ENCODE measurements at regions of chr17 and their contacts with region 1.

Region 1: GRCh38 chr17:56960596-56961538 is at the start of gene COIL:
- DNase-seq: peak; percentile 90 to 93 (median 91)
- H3K4me3 ChIP-seq: peak within 1 kb of the TSS; percentile 81 to 82
- H3K4me3 Mint-ChIP-seq: peak within 1 kb of the TSS; percentile 78 to 91 (median 89)
- H3K27ac ChIP-seq: peak within 1 kb of the TSS; percentile 87
- H3K27ac Mint-ChIP-seq: peak within 1 kb of the TSS; percentile 65 to 96 (median 94)
- H3K4me1 ChIP-seq: peaks cover 20% of the 10 kb centered on the region
- H3K4me1 Mint-ChIP-seq: peaks cover 10 to 29% (median 21%) of the 10 kb centered on the region in 4 donors
- H3K27me3 ChIP-seq: no peaks in the 10 kb centered on the region
- H3K27me3 Mint-ChIP-seq: peaks cover 0 to 1% of the 10 kb centered on the region in 2 donors
- total RNA-seq, gene COIL: 19.1 to 19.6 TPM

Region 2: GRCh38 chr17:56592487-56593085 is 368.3 kb before region 1 on chr17:
- CTCF ChIA-PET with region 1: no interaction called
- POLR2A ChIA-PET with region 1: no interaction called
- intact Hi-C with region 1: loop called (anchors 5 kb)
- DNase-seq: peak; percentile 50 to 61 (median 56)
- H3K4me3 ChIP-seq: peak overlapping the region; percentile 26 to 36
- H3K4me3 Mint-ChIP-seq: peak overlapping the region; percentile 73 to 89 (median 79)
- H3K27ac ChIP-seq: no peak overlapping the region
- H3K27ac Mint-ChIP-seq: peak overlapping the region in 1 of 7 donors; percentile 41
- H3K4me1 ChIP-seq: peaks cover 36% of the 10 kb centered on the region
- H3K4me1 Mint-ChIP-seq: peaks cover 11 to 41% (median 18%) of the 10 kb centered on the region in 4 donors
- H3K27me3 ChIP-seq: peaks cover 13% of the 10 kb centered on the region
- H3K27me3 Mint-ChIP-seq: peaks cover 28 to 46% of the 10 kb centered on the region in 2 donors

Region 3: DNA sequence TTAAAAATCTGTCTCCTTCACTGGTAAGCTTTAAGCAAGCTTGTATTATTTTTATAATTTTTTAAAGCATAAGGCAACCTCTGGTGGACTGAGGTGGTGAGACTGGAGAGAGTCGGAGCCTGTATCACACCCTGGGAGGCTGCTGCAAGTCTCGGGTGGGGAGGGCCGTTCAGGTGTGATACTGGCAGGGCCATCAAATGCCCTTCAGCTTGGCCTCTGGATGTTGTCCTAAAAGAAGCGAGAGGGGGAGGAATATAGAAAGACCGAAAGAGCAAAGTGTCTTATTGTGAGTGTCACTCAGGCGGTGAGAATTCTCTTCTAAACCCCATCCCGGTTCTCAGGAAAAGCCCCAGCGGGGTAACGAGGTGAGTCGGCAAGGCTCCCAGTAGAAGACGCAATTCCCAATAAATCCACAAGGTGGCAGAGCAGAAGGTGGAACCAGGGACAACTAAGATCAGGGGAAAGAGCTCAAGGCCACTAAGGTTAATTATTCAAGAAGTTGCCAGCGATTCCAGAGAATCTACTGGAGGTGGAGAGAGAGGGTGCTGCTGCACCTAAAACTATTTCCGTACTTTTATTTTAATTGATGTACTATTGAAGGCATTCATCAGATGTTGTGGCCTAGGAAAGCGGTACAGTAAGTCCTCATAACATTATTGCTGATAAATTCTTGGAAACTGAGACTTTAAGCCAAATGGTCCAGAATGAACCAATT is 141.3 kb before region 1 on chr17:
- CTCF ChIA-PET with region 1: interaction called, 8 read pairs
- POLR2A ChIA-PET with region 1: no interaction called
- intact Hi-C with region 1: loop called (anchors 1 kb)
- DNase-seq: peak; percentile 69 to 78 (median 71)
- H3K4me3 ChIP-seq: no peak overlapping the region
- H3K4me3 Mint-ChIP-seq: no peak overlapping the region
- H3K27ac ChIP-seq: no peak overlapping the region
- H3K27ac Mint-ChIP-seq: peak overlapping the region in 1 of 7 donors; percentile 29
- H3K4me1 ChIP-seq: peaks cover 4% of the 10 kb centered on the region
- H3K4me1 Mint-ChIP-seq: peaks cover 0 to 6% (median 4%) of the 10 kb centered on the region in 4 donors
- H3K27me3 ChIP-seq: no peaks in the 10 kb centered on the region
- H3K27me3 Mint-ChIP-seq: no peaks in the 10 kb centered on the region

Region 4: GRCh38 chr17:56833809-56834379 is 127.0 kb before region 1 on chr17 and contains the starts of genes C17orf67 and DGKE:
- CTCF ChIA-PET with region 1: no interaction called
- POLR2A ChIA-PET with region 1: interaction called, 3 read pairs
- intact Hi-C with region 1: loop called (anchors 5 kb)
- DNase-seq: peak; percentile 98 to 99 (median 98)
- H3K4me3 ChIP-seq: peak within 1 kb of the TSS; percentile 49 to 88
- H3K4me3 Mint-ChIP-seq: peak within 1 kb of the TSS; percentile 95 to 98 (median 96)
- H3K27ac ChIP-seq: peak within 1 kb of the TSS; percentile 79
- H3K27ac Mint-ChIP-seq: peak within 1 kb of the TSS; percentile 92 to 97 (median 95)
- H3K4me1 ChIP-seq: peaks cover 67% of the 10 kb centered on the region
- H3K4me1 Mint-ChIP-seq: peaks cover 43 to 75% (median 57%) of the 10 kb centered on the region in 4 donors
- H3K27me3 ChIP-seq: no peaks in the 10 kb centered on the region
- H3K27me3 Mint-ChIP-seq: no peaks in the 10 kb centered on the region
- total RNA-seq, gene C17orf67: 9.5 to 11.2 TPM
- total RNA-seq, gene DGKE: 36.7 to 37.7 TPM

Region 5: GRCh38 chr17:56913864-56914640 is 46.8 kb before region 1 on chr17 and contains the start of gene TRIM25:
- CTCF ChIA-PET with region 1: interaction called, 3 read pairs
- POLR2A ChIA-PET with region 1: interaction called, 8 read pairs
- intact Hi-C with region 1: loop called (anchors 1 kb)
- DNase-seq: peak; percentile 75 to 93 (median 80)
- H3K4me3 ChIP-seq: peak within 1 kb of the TSS; percentile 79 to 91
- H3K4me3 Mint-ChIP-seq: peak within 1 kb of the TSS; percentile 80 to 97 (median 90)
- H3K27ac ChIP-seq: peak within 1 kb of the TSS; percentile 85
- H3K27ac Mint-ChIP-seq: peak within 1 kb of the TSS; percentile 78 to 98 (median 94)
- H3K4me1 ChIP-seq: peaks cover 43% of the 10 kb centered on the region
- H3K4me1 Mint-ChIP-seq: peaks cover 33 to 44% (median 40%) of the 10 kb centered on the region in 4 donors
- H3K27me3 ChIP-seq: no peaks in the 10 kb centered on the region
- H3K27me3 Mint-ChIP-seq: no peaks in the 10 kb centered on the region
- total RNA-seq, gene TRIM25: 58.4 to 62.7 TPM

Region 6: DNA sequence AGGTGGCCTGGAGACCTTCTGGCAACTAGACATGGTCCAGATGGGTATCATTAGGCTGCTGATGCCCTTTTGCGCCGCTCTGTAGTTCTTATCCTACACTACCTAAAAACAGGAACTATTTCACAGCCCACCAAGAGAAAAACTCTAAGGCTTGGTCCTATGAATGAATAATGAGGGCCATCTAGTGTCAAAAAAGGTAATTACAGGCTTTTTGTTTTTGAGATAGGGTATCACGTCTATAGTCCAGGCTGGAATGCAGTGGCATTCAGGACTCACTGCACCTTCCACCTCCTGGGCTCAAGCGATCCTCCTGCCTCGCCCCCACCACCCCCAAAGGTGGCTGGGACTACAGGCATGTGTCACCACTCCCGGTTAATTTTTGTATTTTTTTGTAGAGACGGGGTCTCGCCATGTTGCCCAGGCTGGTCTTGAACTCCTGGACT is 20.9 kb before region 1 on chr17:
- CTCF ChIA-PET with region 1: interaction called, 4 read pairs
- POLR2A ChIA-PET with region 1: no interaction called
- intact Hi-C with region 1: loop called (anchors 2 kb)
- DNase-seq: peak in 4 of 5 donors; percentile 42 to 57 (median 53)
- H3K4me3 ChIP-seq: no peak overlapping the region
- H3K4me3 Mint-ChIP-seq: no peak overlapping the region
- H3K27ac ChIP-seq: no peak overlapping the region
- H3K27ac Mint-ChIP-seq: peak overlapping the region in 3 of 7 donors; percentile 51 to 81 (median 59)
- H3K4me1 ChIP-seq: no peaks in the 10 kb centered on the region
- H3K4me1 Mint-ChIP-seq: peaks cover 0 to 5% (median 0%) of the 10 kb centered on the region in 4 donors
- H3K27me3 ChIP-seq: no peaks in the 10 kb centered on the region
- H3K27me3 Mint-ChIP-seq: no peaks in the 10 kb centered on the region

Region 7: GRCh38 chr17:56977673-56978395 is 17.0 kb after region 1 on chr17 and contains the start of gene SCPEP1:
- CTCF ChIA-PET with region 1: interaction called, 4 read pairs
- POLR2A ChIA-PET with region 1: interaction called, 6 read pairs
- intact Hi-C with region 1: loop called (anchors 2 kb)
- DNase-seq: peak; percentile 77 to 87 (median 80)
- H3K4me3 ChIP-seq: peak within 1 kb of the TSS; percentile 46 to 68
- H3K4me3 Mint-ChIP-seq: peak within 1 kb of the TSS; percentile 90 to 94 (median 91)
- H3K27ac ChIP-seq: peak within 1 kb of the TSS; percentile 32
- H3K27ac Mint-ChIP-seq: peak within 1 kb of the TSS; percentile 81 to 96 (median 90)
- H3K4me1 ChIP-seq: peaks cover 19% of the 10 kb centered on the region
- H3K4me1 Mint-ChIP-seq: peaks cover 11 to 28% (median 19%) of the 10 kb centered on the region in 4 donors
- H3K27me3 ChIP-seq: no peaks in the 10 kb centered on the region
- H3K27me3 Mint-ChIP-seq: peaks cover 1 to 4% of the 10 kb centered on the region in 2 donors
- total RNA-seq, gene SCPEP1: 16.3 to 19.4 TPM